Motor neuron (in vitro differentiated cells): ENCODE measurements at regions of chr6 and their contacts with region 1.

Region 1: GRCh38 chr6:149028767-149029405 is 282.1 kb downstream of the UST start:
- ATAC-seq: peak; percentile 29 to 69 (median 54)
- H3K4me3 ChIP-seq: no peak overlapping the region
- H3K27ac ChIP-seq: no peak overlapping the region
- H3K4me1 ChIP-seq: peaks cover 9 to 16% of the 10 kb centered on the region in 2 donors

Region 2: GRCh38 chr6:149431905-149432775 is 403.3 kb after region 1 on chr6:
- in situ Hi-C with region 1: loop called in 3 of 9 experiments (anchors 25 kb)
- ATAC-seq: peak; percentile 98 to 99 (median 99)
- H3K4me3 ChIP-seq: no peak overlapping the region
- H3K27ac ChIP-seq: no peak overlapping the region
- H3K4me1 ChIP-seq: peaks cover 0 to 2% of the 10 kb centered on the region in 2 donors